AG04449 (cell line): ENCODE measurements at regions of chr19 and their contacts with region 1.

Region 1: DNA sequence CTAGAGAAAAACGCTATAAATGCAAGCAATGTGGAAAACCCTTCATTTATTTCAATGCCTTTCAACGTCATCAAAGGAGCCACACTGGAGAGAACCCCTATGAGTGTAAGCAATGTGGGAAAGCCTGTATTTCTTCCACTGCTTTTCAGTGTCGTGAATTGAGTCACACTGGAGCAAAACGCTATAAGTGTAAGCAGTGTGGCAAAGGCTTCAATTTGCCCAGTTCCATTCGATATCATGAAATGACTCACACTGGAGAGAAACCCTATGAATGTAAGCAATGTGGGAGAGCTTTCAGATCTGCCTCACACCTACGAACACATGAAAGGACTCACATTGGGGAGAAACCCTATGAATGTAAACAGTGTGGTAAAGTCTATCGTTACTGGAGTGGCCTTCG is 27.4 kb downstream of the ZNF20 start:
- DNase-seq: no peak
- H3K4me3 ChIP-seq: no peak overlapping the region
- CTCF ChIP-seq: no peak

Region 2: GRCh38 chr19:12092065-12092867 is 20.4 kb before region 1 on chr19:
- CTCF ChIA-PET with region 1: interaction called, 13 read pairs
- POLR2A ChIA-PET with region 1: no interaction called
- DNase-seq: peak; percentile 37
- H3K4me3 ChIP-seq: peak overlapping the region; percentile 78
- CTCF ChIP-seq: no peak

Region 3: GRCh38 chr19:12126707-12127106 is 14.0 kb after region 1 on chr19:
- CTCF ChIA-PET with region 1: interaction called, 11 read pairs
- POLR2A ChIA-PET with region 1: no interaction called
- DNase-seq: no peak
- H3K4me3 ChIP-seq: no peak overlapping the region
- CTCF ChIP-seq: peak; percentile 15

Region 4: GRCh38 chr19:12331211-12331941 is 218.7 kb after region 1 on chr19:
- CTCF ChIA-PET with region 1: no interaction called
- POLR2A ChIA-PET with region 1: no interaction called
- DNase-seq: no peak
- H3K4me3 ChIP-seq: no peak overlapping the region
- CTCF ChIP-seq: no peak